Activated CD4-positive, alpha-beta T cell treated with anti-CD3 and anti-CD28 coated beads, Interleukin-2, amount 10 ng/mL, durations not matched to agents 24 days and 14 days (primary cell): ENCODE measurements at regions of chr15 and their contacts with region 1.

Region 1: GRCh38 chr15:70826634-70827033 is 27.3 kb downstream of the LARP6 start:
- DNase-seq: no peak
- H3K4me3 Mint-ChIP-seq: no peak overlapping the region
- H3K27ac Mint-ChIP-seq: no peak overlapping the region
- H3K4me1 Mint-ChIP-seq: no peaks in the 10 kb centered on the region
- H3K27me3 Mint-ChIP-seq: no peaks in the 10 kb centered on the region

Region 2: DNA sequence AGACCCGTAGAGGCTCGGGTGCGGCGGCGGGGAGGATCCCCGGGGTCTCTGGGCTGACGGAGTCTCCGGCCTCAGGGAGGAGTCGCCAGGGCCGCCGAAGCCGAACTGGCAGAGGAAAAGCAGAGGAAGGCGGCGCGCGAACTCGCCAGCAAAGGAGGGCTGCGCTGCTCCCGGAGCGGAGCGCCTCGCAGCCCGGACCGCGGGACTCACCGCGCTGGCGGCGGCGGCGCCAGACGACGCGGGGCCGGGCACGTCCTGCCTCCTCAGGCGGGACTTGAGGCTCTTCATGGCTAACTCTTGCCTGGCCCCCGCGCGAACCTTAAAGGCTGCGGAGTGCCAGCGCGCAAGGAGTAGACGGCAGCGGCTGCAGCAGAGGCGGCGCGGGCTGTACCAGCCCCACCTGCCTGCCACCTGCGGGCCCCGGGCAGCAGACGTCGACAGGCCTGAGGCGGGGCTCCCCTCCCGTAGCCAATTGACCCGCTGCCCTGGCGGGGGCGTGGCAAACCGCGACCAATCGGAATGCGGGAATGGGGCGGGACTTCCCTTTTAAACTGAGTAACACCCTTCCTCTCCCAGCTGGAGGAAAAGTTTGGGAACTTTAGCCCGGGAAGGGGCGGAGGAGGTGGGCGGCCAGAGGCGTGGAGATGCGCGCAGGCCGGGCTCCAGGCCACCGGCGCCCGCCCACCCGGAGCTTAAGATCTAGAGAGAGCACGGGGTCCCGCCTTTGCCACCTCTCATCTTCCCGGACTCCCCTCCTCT is 63.3 kb before region 1 on chr15 and contains the start of gene UACA:
- intact Hi-C with region 1: no loop called
- DNase-seq: peak; percentile 93
- H3K4me3 Mint-ChIP-seq: peak within 1 kb of the TSS; percentile 74
- H3K27ac Mint-ChIP-seq: no peak within 1 kb of the TSS
- H3K4me1 Mint-ChIP-seq: peaks cover 16% of the 10 kb centered on the region
- H3K27me3 Mint-ChIP-seq: peaks cover 44% of the 10 kb centered on the region
- total RNA-seq, gene UACA: 0.40 and 0.68 TPM in 2 replicates

Region 3: DNA sequence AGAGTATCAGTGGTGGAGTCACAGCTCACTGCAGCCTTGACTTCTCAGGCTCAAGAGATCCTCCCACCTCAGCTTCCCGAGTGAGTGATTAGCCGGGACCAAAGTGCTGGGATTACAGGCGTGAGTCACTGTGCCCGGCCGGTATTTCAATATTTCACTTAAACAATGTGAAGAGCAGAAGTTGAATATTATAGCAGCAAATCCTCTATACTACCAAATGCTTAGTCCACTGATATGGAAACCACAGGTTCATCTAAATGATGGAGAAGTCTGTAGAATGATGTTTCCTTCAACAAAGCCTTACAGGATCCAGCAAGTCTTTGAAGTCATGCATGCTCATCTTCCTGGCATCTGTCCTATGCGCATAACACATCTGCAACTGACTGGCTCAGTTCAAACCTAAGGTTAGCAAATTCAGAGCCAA is 43.0 kb before region 1 on chr15:
- intact Hi-C with region 1: no loop called
- DNase-seq: no peak
- H3K4me3 Mint-ChIP-seq: no peak overlapping the region
- H3K27ac Mint-ChIP-seq: no peak overlapping the region
- H3K4me1 Mint-ChIP-seq: no peaks in the 10 kb centered on the region
- H3K27me3 Mint-ChIP-seq: peaks cover 14% of the 10 kb centered on the region

Region 4: DNA sequence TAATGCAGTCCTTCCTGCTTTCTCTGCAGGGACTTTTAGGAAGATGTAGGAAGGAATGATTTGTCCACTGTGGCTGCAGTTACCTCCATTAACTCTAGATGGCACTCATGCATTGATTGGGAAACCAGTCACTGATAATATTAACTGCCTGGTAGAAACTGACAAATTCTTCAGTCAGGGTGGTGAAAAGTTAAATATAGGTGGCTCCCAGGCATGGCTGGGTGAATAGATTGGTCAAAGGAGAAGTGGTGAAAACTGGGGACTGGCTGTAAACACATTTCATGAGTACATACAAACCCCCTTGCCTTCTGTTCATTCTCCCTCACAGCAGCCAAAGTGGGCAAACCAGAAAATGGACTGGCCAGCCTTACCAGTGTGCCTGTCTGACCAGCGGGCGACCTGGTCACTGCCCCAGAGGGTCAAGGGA is 622.1 kb after region 1 on chr15:
- intact Hi-C with region 1: loop called (anchors 10 kb)
- DNase-seq: no peak
- H3K4me3 Mint-ChIP-seq: no peak overlapping the region
- H3K27ac Mint-ChIP-seq: no peak overlapping the region
- H3K4me1 Mint-ChIP-seq: no peaks in the 10 kb centered on the region
- H3K27me3 Mint-ChIP-seq: no peaks in the 10 kb centered on the region